Aorta (tissue), 5 donors: ENCODE measurements at regions of chr7 and their contacts with region 1.

Region 1: DNA sequence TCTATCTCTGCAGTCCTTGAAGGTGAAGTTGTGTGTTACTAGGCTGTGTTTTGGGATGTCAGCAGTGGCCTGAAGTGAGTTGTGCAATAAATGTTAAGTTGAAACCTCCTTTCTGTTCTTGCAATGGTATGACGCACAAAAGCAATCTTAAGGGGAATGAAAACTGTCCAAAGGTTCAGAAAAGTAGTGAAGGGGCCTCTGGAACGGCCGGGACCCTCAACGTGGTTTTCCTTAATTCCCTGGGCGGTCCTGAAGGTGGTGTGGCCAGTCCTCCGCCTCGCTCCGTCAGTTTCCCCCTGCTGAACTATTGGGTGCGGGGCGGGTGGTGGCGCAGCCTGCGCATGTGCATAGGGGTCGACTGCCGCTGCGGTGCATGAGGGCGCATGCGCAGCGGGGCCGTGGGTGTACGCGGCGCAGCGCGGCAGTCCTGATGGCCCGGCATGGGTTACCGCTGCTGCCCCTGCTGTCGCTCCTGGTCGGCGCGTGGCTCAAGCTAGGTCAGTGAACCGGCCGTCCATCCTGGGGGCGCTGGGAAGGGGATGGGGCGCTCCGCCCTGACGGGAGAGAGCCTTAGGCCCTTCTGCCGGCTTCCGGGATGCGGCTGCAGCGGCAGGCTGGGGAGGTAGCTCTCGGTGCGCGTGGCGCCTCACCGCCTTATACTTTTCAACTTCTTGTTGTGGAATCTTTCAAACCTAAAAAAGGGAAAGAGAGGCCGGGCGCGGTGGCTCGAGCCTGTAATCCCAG is at the start of gene SUMF2:
- DNase-seq: peak; percentile 95 to 97
- ATAC-seq: peak; percentile 99
- H3K4me3 ChIP-seq: peak within 1 kb of the TSS; percentile 43 to 96
- H3K27ac ChIP-seq: peak within 1 kb of the TSS; percentile 53 to 68
- H3K4me1 ChIP-seq: no peaks in the 10 kb centered on the region
- H3K27me3 ChIP-seq: no peaks in the 10 kb centered on the region
- total RNA-seq, gene SUMF2: 95.2 to 118 TPM

Region 2: GRCh38 chr7:56051339-56052191 is 12.5 kb before region 1 on chr7 and contains the starts of genes CCT6A and PSPH:
- intact Hi-C with region 1: loop called in 1 of 2 experiments (anchors 1 kb)
- DNase-seq: peak; percentile 98 to 99
- ATAC-seq: peak; percentile 100
- H3K4me3 ChIP-seq: peak within 1 kb of the TSS; percentile 71 to 83
- H3K27ac ChIP-seq: peak within 1 kb of the TSS; percentile 34 to 90
- H3K4me1 ChIP-seq: no peaks in the 10 kb centered on the region
- H3K27me3 ChIP-seq: no peaks in the 10 kb centered on the region
- total RNA-seq, gene CCT6A: 80.6 to 82.8 TPM
- total RNA-seq, gene PSPH: 4.3 to 5.7 TPM

Region 3: GRCh38 chr7:56447864-56448693 is 384.0 kb after region 1 on chr7:
- intact Hi-C with region 1: no loop called
- DNase-seq: peak; percentile 59 to 76
- ATAC-seq: peak; percentile 80
- H3K4me3 ChIP-seq: peak overlapping the region; percentile 7 to 70
- H3K27ac ChIP-seq: no peak overlapping the region
- H3K4me1 ChIP-seq: no peaks in the 10 kb centered on the region
- H3K27me3 ChIP-seq: no peaks in the 10 kb centered on the region